K562 (cell line): ENCODE measurements at regions of chr5 and their contacts with region 1.

Region 1: GRCh38 chr5:65481635-65482295 is at the start of gene ADAMTS6:
- DNase-seq: peak; percentile 71 to 93 (median 79)
- ATAC-seq: peak; percentile 89
- H3K4me3 ChIP-seq: peak within 1 kb of the TSS; percentile 50
- H3K27ac ChIP-seq: peak within 1 kb of the TSS; percentile 89
- H3K4me1 ChIP-seq: peaks cover 0 to 11% of the 10 kb centered on the region in 2 experiments; a peak in 1 of 5 replicates
- H3K27me3 ChIP-seq: no peaks in the 10 kb centered on the region
- CTCF ChIP-seq: no peak
- EP300 ChIP-seq: no peak; the same call in 1 of the 2 replicates
- POLR2A ChIP-seq: 0 out of 2 replicates have a peak, but pooled peaks have one; percentile 59
- RAD21 ChIP-seq: 0 out of 4 replicates have a peak, but pooled peaks of 1 of the 2 experiments have one; percentile 12
- polyA plus RNA-seq, gene ADAMTS6: 0.57 to 0.59 TPM

Region 2: GRCh38 chr5:64634997-64635686 is 846.6 kb before region 1 on chr5:
- CTCF ChIA-PET with region 1: no interaction called
- POLR2A ChIA-PET with region 1: no interaction called
- in situ Hi-C with region 1: loop called (anchors 25 kb)
- intact Hi-C with region 1: loop called (anchors 2 kb)
- DNase-seq: peak; percentile 18 to 37 (median 20)
- ATAC-seq: no peak
- H3K4me3 ChIP-seq: no peak overlapping the region
- H3K27ac ChIP-seq: no peak overlapping the region
- H3K4me1 ChIP-seq: peaks cover 0 to 7% of the 10 kb centered on the region in 2 experiments; a peak in 2 of 5 replicates
- H3K27me3 ChIP-seq: peaks cover 0 to 6% of the 10 kb centered on the region in 2 experiments; a peak in 2 of 5 replicates
- CTCF ChIP-seq: peak; percentile 46 to 78 (median 53); a peak in 5 of 6 replicates
- EP300 ChIP-seq: no peak
- POLR2A ChIP-seq: no peak
- RAD21 ChIP-seq: peak; percentile 76 to 89

Region 3: DNA sequence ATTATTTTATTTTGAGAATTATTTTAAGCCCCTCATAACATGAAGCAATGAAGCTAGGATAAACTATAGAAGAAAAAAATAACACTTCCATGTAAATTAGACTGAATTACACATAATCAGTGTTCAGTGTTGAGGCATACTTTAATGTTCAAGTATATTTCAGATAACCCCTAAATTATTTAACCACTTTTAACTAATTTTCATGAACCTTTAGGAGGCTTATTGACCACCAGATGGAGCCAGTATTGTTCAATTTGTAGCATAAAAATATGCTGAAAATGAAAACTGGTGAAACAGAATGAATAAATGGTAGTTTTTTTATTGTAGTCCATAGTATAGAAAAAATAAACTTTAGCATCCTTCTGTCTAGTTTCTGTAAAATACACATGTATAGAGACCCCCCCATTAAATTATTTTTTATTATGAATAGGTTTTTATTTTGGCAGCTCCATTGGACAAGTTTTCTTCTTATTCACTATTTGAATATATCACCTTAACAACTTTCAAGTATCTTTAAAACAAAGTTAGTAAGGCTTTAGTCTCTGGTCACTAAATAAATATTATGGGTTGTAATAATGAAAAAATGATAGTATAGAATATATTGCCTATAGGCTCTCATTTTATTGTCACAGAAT is 522.9 kb before region 1 on chr5:
- CTCF ChIA-PET with region 1: interaction called, 3 read pairs
- POLR2A ChIA-PET with region 1: interaction called, 5 read pairs
- in situ Hi-C with region 1: loop called (anchors 25 kb)
- intact Hi-C with region 1: loop called (anchors 1 kb)
- DNase-seq: peak in 2 of 4 experiments; percentile 5 to 26
- ATAC-seq: peak; percentile 43; the same call in 1 of the 3 replicates
- H3K4me3 ChIP-seq: no peak overlapping the region
- H3K27ac ChIP-seq: no peak overlapping the region
- H3K4me1 ChIP-seq: no peaks in the 10 kb centered on the region
- H3K27me3 ChIP-seq: no peaks in the 10 kb centered on the region
- CTCF ChIP-seq: peak; percentile 12 to 63 (median 34); a peak in 3 of 6 replicates
- EP300 ChIP-seq: no peak
- POLR2A ChIP-seq: no peak
- RAD21 ChIP-seq: peak; percentile 64 to 84

Region 4: DNA sequence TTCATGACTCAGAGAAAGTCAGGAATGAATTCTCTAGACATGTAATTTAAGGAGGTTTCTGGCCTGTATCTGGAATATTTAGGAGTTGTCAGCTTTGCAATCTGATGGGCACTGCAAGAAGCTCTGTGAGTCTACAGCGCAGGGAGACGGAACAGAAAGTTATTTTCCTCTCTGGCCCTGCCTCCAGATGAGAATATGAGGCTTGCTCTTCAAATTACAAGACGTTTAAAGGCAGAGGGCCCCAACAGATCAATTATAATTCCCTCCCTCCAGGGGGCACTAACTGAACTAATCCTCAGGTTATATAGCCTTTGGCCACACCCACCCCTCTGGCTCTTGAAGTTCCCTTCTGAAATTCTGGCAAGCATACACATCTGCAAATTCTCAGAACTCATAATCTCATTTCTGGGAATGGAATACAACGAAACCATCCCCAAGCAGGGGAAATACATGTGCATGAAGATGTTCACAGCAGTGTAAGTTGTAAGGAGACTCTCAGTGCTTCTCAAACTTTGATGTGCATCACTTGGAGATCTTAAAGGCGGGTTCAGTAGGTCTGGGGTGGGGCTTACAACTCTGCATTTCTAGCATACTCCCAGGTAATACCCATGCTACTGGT is 405.4 kb before region 1 on chr5:
- CTCF ChIA-PET with region 1: no interaction called
- POLR2A ChIA-PET with region 1: no interaction called
- in situ Hi-C with region 1: no loop called
- intact Hi-C with region 1: loop called (anchors 2 kb)
- DNase-seq: peak; percentile 82 to 94 (median 86)
- ATAC-seq: peak; percentile 97
- H3K4me3 ChIP-seq: no peak overlapping the region
- H3K27ac ChIP-seq: peak overlapping the region; percentile 47; the same call in 2 of the 3 replicates
- H3K4me1 ChIP-seq: peaks cover 5 to 32% of the 10 kb centered on the region in 2 experiments
- H3K27me3 ChIP-seq: no peaks in the 10 kb centered on the region
- CTCF ChIP-seq: peak; percentile 58 to 75 (median 66)
- EP300 ChIP-seq: peak; percentile 83
- POLR2A ChIP-seq: no peak
- RAD21 ChIP-seq: peak; percentile 61 to 74

Region 5: DNA sequence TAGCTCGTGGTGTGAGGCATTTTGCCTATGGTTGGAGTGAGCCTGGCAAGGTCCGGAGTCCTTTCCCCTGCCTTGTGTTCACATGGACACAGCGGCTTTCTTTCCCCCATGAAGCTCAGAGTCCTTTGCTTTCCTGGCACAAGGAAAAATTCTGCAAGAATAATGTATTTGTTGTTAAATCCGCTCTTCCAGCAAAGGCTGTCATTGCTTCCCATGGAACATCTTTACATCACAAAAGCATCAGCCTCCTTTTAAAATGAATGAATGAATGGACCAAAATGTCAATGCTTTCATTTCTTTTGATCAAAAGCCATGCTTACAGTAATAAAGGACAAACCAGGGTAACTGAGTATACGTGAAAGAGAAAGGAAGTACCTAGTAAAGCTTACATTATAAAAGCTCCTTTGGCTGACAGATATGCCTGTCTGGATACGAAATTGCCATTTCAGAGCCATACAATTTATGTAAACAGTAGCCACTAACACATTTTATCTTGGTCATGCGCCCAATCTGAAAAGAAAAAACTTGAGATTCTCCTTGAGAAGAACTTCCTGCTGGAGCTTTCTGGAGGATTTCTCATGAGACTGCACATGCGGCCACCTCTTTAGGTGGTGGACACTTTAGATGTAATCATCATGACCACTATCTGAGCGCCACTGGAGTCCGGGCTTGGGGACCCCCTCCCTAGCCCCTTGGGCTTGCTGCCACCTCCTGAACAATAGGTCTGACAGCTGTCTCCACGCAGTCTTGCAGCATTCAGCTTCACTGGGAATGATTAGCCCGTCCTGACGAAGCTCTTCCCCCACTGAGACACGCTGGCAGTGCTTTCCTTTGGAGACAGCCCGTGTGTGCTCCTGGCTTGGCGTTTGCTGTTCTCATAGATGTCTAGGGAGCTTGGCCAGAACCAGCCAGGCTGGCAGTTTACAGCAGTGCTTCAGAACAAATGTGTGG is 355.9 kb before region 1 on chr5:
- CTCF ChIA-PET with region 1: no interaction called
- POLR2A ChIA-PET with region 1: no interaction called
- in situ Hi-C with region 1: no loop called
- intact Hi-C with region 1: no loop called
- DNase-seq: no peak
- ATAC-seq: peak; percentile 29
- H3K4me3 ChIP-seq: no peak overlapping the region
- H3K27ac ChIP-seq: no peak overlapping the region
- H3K4me1 ChIP-seq: peaks cover 0 to 24% of the 10 kb centered on the region in 2 experiments; a peak in 3 of 5 replicates
- H3K27me3 ChIP-seq: no peaks in the 10 kb centered on the region
- CTCF ChIP-seq: no peak
- EP300 ChIP-seq: no peak
- POLR2A ChIP-seq: no peak
- RAD21 ChIP-seq: no peak

Region 6: DNA sequence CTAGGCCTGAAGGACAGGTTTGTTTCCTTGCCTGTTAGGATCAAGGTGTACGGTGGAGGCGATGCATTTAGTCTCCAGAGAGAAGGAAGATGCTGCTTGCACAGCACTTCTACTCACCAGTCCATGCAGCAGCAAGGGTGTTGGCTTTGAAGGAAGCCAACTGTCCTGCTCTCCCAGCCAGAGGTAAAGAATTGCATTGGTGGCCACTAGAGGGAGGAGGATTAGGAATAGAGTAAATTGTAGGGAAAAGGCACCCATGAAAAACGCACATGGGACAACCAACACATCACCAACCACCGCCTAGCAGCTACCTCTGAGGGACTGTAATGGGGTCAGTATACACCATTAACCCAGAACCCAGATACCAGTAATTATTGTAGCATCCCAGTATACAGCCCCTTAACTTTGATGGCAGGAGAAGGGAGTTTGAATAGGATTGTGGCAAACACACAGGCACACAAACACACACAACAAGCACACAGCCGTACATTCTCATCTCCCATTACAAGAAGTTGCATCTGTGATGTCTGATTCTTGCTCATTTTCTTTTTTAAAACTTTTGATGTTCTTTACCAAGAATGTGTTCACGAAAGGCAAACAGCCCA is 267.7 kb before region 1 on chr5:
- CTCF ChIA-PET with region 1: no interaction called
- POLR2A ChIA-PET with region 1: no interaction called
- in situ Hi-C with region 1: loop called (anchors 5 kb)
- intact Hi-C with region 1: loop called (anchors 5 kb)
- DNase-seq: peak; percentile 10 to 35 (median 22)
- ATAC-seq: peak; percentile 80
- H3K4me3 ChIP-seq: no peak overlapping the region
- H3K27ac ChIP-seq: no peak overlapping the region
- H3K4me1 ChIP-seq: no peaks in the 10 kb centered on the region
- H3K27me3 ChIP-seq: no peaks in the 10 kb centered on the region
- CTCF ChIP-seq: peak; percentile 35 to 61 (median 56)
- EP300 ChIP-seq: no peak
- POLR2A ChIP-seq: no peak
- RAD21 ChIP-seq: peak; percentile 5 to 44; a peak in 2 of 4 replicates

Region 7: GRCh38 chr5:65334077-65334476 is 147.7 kb before region 1 on chr5:
- CTCF ChIA-PET with region 1: no interaction called
- POLR2A ChIA-PET with region 1: no interaction called
- in situ Hi-C with region 1: no loop called
- intact Hi-C with region 1: no loop called
- DNase-seq: no peak
- ATAC-seq: no peak
- H3K4me3 ChIP-seq: no peak overlapping the region
- H3K27ac ChIP-seq: no peak overlapping the region
- H3K4me1 ChIP-seq: no peaks in the 10 kb centered on the region
- H3K27me3 ChIP-seq: no peaks in the 10 kb centered on the region
- CTCF ChIP-seq: no peak
- EP300 ChIP-seq: no peak
- POLR2A ChIP-seq: no peak
- RAD21 ChIP-seq: no peak

Region 8: DNA sequence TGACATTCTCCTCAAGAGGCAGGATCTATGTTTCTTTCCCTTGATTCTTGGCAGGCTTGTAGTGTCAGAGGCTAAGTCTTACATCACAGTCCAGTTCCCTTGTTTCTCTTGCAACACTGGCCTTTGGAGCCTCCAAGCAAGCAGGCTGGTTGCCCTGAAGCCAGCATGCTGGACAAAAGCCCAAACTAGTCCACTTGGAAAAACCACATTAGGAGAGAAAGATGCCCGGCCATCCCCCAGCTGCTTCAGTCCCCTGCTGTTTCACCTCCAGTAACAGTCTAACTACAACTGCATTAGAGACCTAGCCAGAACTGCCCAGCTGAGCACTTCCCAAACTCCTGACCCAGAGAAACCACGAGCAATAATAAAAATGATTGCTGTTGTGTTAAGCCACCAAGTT is 87.7 kb before region 1 on chr5:
- CTCF ChIA-PET with region 1: no interaction called
- POLR2A ChIA-PET with region 1: no interaction called
- in situ Hi-C with region 1: no loop called
- intact Hi-C with region 1: loop called (anchors 5 kb)
- DNase-seq: no peak
- ATAC-seq: no peak
- H3K4me3 ChIP-seq: no peak overlapping the region
- H3K27ac ChIP-seq: no peak overlapping the region
- H3K4me1 ChIP-seq: no peaks in the 10 kb centered on the region
- H3K27me3 ChIP-seq: no peaks in the 10 kb centered on the region
- CTCF ChIP-seq: no peak
- EP300 ChIP-seq: no peak
- POLR2A ChIP-seq: no peak
- RAD21 ChIP-seq: no peak

Region 9: GRCh38 chr5:65611524-65611923 is 129.8 kb after region 1 on chr5:
- CTCF ChIA-PET with region 1: no interaction called
- POLR2A ChIA-PET with region 1: no interaction called
- in situ Hi-C with region 1: no loop called
- intact Hi-C with region 1: no loop called
- DNase-seq: no peak
- ATAC-seq: no peak
- H3K4me3 ChIP-seq: no peak overlapping the region
- H3K27ac ChIP-seq: no peak overlapping the region
- H3K4me1 ChIP-seq: no peaks in the 10 kb centered on the region
- H3K27me3 ChIP-seq: no peaks in the 10 kb centered on the region
- CTCF ChIP-seq: no peak
- EP300 ChIP-seq: no peak
- POLR2A ChIP-seq: no peak
- RAD21 ChIP-seq: no peak